ENCODE measurements at regions of chr16 and their contacts with region 1.

Region 1: DNA sequence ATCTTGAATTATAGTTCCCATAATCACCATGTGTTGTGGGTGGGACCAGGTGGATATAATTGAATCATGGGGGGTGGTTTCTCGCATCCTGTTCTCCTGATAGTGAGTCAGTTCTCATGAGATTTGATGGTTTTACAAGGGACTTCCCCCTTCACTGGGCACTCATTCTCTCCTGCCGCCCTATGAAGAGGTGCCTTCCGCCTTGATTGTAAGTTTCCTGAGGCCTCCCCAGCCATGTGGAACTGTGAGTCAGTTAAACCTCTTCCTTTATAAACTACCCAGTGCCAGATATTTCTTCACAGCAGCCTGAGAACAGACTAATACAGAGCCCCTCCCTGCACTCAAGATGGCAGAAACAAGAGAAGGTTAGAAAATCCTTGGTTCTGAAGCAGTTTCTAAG is 26.4 kb downstream of the LDAF1 start:
- DNase-seq: no peak
- H3K4me3 ChIP-seq: no peak overlapping the region
- H3K27ac ChIP-seq: no peak overlapping the region
- H3K4me1 ChIP-seq: peaks cover 11% of the 10 kb centered on the region; the same call in 1 of the 2 replicates
- H3K27me3 ChIP-seq: no peaks in the 10 kb centered on the region
- CTCF ChIP-seq: no peak

Region 2: DNA sequence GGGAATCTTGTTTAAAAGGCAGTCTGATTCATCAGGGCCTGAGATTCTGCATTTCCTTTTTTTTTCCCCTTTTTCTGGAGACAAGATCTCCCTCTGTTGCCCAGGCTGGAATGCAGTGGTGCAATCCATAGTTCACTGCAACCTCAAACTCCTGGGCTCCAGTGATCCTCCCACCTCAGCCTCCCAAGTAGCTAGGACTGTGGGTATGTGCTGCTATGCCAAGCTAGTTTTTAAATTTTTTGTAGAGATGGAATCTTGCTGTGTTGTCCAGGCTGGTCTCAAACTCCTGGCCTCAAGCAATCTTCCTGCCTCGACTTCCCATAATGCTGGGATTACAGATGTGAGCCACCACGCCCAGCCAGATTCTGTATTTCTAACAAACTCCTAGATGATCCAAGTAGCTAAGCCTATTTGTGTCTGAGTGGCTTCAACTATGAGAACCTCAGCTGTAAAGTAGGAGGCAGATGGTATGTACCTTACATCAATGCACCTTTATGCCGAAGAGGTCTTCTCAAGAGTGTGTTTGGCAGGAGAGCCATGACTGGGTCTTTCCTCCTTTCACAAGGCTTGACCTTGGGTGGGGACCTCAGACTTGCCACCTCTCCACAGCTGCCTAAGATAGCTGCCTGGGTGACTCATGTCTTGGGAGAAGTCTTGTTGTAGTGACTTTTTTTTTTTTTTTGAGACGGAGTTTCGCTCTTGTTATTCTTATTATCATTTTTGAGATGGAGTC is 15.4 kb before region 1 on chr16:
- CTCF ChIA-PET with region 1: no interaction called
- POLR2A ChIA-PET with region 1: interaction called, 11 read pairs
- intact Hi-C with region 1: no loop called
- DNase-seq: peak in 1 of 2 experiments; percentile 61
- H3K4me3 ChIP-seq: no peak overlapping the region
- H3K27ac ChIP-seq: no peak overlapping the region
- H3K4me1 ChIP-seq: no peaks in the 10 kb centered on the region
- H3K27me3 ChIP-seq: no peaks in the 10 kb centered on the region
- CTCF ChIP-seq: no peak

Region 3: DNA sequence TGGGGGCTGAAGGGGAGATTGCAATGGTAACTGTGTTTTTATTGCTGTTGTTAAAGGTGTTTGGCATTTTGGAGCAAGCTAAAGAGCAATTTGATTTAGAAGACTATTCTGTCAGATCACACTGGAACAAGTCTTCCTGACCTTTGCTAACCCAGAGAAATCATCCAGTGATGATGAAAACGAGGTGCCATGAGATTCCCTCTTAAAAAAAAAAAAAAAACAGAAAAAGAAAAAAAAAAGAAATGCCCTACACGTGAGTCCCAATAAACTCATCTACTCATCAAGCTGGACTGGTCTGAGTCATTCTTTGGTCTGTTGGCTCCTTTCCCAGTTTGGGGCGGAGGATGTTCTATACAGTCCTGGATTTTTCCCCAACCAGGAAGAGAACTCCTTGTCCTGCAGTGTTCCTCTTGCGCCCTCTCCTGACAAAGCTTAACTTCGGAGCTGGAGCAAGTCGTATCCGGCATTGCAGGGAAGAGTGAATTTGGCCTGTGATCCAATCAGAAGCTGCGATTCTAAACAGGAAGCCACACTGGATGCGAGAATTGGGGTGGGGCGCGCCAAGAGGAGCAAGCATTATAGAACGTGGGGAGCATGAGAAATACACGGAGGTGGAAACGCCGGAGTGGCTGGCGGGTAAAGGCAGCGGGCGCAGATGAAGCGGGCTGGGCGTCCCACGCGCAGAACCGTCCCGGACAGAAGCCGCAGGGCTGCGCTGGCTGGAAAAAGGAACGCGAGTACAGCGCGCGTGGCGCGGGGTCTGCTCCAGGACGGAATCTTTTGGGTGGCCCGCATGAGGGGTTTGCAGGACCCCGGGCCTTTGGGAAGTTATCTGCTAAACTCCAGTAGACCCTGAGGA is 115.7 kb after region 1 on chr16:
- CTCF ChIA-PET with region 1: interaction called, 19 read pairs
- POLR2A ChIA-PET with region 1: interaction called, 3 read pairs
- intact Hi-C with region 1: loop called (anchors 1 kb)
- DNase-seq: peak; percentile 98 to 100
- H3K4me3 ChIP-seq: peak overlapping the region; percentile 88
- H3K27ac ChIP-seq: peak overlapping the region; percentile 85
- H3K4me1 ChIP-seq: peaks cover 27% of the 10 kb centered on the region
- H3K27me3 ChIP-seq: no peaks in the 10 kb centered on the region
- CTCF ChIP-seq: peak; percentile 80

Region 4: GRCh38 chr16:21321736-21322135 is 136.9 kb after region 1 on chr16:
- CTCF ChIA-PET with region 1: no interaction called
- POLR2A ChIA-PET with region 1: no interaction called
- intact Hi-C with region 1: no loop called
- DNase-seq: no peak
- H3K4me3 ChIP-seq: no peak overlapping the region
- H3K27ac ChIP-seq: no peak overlapping the region
- H3K4me1 ChIP-seq: no peaks in the 10 kb centered on the region
- H3K27me3 ChIP-seq: no peaks in the 10 kb centered on the region
- CTCF ChIP-seq: no peak

Region 5: GRCh38 chr16:21338537-21339268 is 153.9 kb after region 1 on chr16:
- CTCF ChIA-PET with region 1: interaction called, 12 read pairs
- POLR2A ChIA-PET with region 1: no interaction called
- intact Hi-C with region 1: no loop called
- DNase-seq: no peak
- H3K4me3 ChIP-seq: no peak overlapping the region
- H3K27ac ChIP-seq: no peak overlapping the region
- H3K4me1 ChIP-seq: no peaks in the 10 kb centered on the region
- H3K27me3 ChIP-seq: no peaks in the 10 kb centered on the region
- CTCF ChIP-seq: no peak

Region 6: DNA sequence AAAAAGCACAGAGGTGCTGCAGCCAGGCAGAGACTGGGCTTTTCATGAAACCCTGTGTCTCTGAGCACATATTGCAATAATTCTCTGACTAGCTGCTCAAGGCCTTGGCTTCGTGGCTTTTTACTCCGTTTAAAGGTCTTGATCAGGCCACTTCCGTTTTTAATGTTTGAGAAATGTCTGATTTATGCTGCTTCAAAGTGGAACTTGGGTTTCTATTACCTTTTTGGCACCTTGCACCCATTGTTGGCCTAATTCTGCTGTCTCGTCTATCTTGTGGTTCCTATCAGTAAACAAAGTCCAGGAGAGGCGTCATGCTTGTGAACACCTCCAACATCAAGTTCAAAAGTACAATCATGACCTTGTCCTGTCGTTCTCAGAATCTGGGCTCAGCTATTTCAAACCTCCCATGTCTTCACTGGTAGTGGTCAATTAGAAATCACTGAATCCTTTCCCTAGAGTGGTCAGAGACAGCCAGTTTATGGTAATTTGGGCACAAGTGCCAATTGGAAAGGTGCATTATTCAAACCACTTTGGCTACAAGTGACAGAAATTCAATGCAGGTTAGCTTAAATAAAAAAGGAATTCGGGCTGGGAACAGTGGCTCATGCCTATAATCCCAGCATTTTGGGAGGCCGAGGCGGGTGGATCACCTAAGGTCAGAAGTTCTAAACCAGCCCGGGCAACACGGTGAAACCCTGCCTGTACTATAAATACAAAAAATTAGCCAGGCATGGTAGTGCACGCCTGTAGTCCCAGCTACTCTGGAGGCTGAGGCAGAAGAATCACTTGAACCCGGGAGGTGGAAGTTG is 381.2 kb after region 1 on chr16:
- CTCF ChIA-PET with region 1: no interaction called
- POLR2A ChIA-PET with region 1: no interaction called
- intact Hi-C with region 1: loop called (anchors 10 kb)
- DNase-seq: no peak
- H3K4me3 ChIP-seq: no peak overlapping the region
- H3K27ac ChIP-seq: no peak overlapping the region
- H3K4me1 ChIP-seq: peaks cover 8% of the 10 kb centered on the region; the same call in 1 of the 2 replicates
- H3K27me3 ChIP-seq: no peaks in the 10 kb centered on the region
- CTCF ChIP-seq: no peak

Region 7: GRCh38 chr16:22321339-22322001 is 1136.6 kb after region 1 on chr16:
- CTCF ChIA-PET with region 1: no interaction called
- POLR2A ChIA-PET with region 1: no interaction called
- intact Hi-C with region 1: loop called (anchors 1 kb)
- DNase-seq: peak; percentile 54 to 59
- H3K4me3 ChIP-seq: no peak overlapping the region
- H3K27ac ChIP-seq: no peak overlapping the region
- H3K4me1 ChIP-seq: no peaks in the 10 kb centered on the region
- H3K27me3 ChIP-seq: no peaks in the 10 kb centered on the region
- CTCF ChIP-seq: peak; percentile 94